ENCODE measurements at regions of chr1 and their contacts with region 1.

Region 1: DNA sequence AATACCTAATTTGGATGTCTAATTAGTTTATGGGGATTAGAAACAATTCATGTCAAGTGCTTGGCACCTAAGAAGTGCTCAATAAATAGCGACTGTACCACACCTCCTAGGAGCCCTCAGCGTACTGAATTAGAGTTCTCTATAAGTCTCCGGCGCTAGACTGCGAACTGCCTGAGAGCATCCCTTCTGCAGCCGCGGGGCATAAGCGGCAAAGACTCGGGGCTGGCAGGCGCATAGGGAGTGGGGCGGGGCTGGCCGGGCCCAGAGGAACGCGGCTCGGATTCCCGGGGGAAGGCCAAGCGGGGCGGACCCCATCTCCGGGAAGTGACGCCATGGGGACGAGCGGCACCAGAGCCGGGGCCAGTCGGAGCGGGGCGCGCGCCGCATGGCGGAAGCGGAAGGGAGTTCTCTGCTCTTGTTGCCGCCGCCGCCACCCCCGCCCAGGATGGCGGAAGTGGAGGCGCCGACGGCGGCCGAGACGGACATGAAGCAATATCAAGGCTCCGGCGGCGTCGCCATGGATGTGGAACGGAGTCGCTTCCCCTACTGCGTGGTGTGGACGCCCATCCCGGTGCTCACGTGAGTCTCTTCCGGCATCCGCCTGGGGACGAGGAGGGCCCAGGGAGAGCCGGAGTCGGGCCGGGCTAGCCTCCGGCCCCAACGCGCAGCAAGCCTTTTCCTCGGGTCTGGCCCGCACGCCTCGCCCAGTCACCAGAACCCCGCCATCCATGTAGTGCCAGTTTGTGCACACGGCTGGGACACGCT is at the start of gene TMEM222:
- DNase-seq: peak; percentile 97
- H3K4me3 ChIP-seq: peak within 1 kb of the TSS; percentile 89 to 97
- H3K4me3 Mint-ChIP-seq: peak within 1 kb of the TSS; percentile 95 to 99 (median 98)
- H3K27ac ChIP-seq: peak within 1 kb of the TSS; percentile 95
- H3K27ac Mint-ChIP-seq: peak within 1 kb of the TSS; percentile 95 to 98 (median 96)
- H3K4me1 ChIP-seq: peaks cover 53% of the 10 kb centered on the region
- H3K4me1 Mint-ChIP-seq: peaks cover 27 to 58% (median 44%) of the 10 kb centered on the region in 4 donors
- H3K27me3 ChIP-seq: peaks cover 5% of the 10 kb centered on the region
- H3K27me3 Mint-ChIP-seq: peaks cover 3 to 4% of the 10 kb centered on the region in 2 donors
- total RNA-seq, gene TMEM222: 44.4 to 45.4 TPM

Region 2: DNA sequence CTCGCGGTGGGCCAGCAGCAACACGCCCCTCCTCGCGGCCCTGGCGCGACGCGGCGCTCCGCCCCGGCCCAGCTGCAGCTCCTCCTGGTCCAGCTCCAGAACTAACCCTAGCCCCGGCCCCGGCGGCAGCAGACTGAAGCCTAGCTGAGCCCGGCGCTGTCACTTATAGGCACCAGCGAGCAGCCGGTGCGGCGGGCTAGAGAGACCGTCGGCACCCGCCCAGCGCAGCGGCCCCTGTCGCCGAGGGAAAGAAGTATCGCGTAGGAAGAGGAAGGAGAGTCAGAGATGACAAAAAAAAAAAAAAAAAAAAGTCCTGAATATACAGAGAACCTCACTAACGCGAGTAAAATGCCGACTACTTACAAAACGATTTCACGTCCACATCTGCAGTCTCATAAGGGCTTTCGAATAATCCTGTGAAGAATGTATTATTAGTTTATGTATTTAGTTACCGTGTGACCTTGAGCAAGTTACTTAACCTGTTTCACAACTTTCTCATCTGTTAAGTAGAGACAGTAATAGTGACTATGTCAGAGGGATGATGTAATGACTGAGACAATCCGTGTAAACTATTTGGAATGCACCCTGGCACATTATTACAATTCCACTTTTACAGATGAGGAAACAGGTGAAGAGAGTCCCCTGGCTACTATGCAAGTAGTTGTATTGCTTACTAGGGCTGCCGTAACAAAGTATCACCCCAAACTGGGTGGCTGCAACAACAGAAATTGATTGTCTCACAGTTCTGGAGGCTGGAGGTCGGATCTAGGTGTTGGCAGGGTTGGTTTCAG is 166.8 kb before region 1 on chr1 and contains the start of gene SLC9A1:
- CTCF ChIA-PET with region 1: no interaction called
- POLR2A ChIA-PET with region 1: no interaction called
- intact Hi-C with region 1: loop called (anchors 1 kb)
- DNase-seq: peak; percentile 93 to 95 (median 93)
- H3K4me3 ChIP-seq: peak within 1 kb of the TSS; percentile 38 to 42
- H3K4me3 Mint-ChIP-seq: peak within 1 kb of the TSS; percentile 82 to 95 (median 92)
- H3K27ac ChIP-seq: peak within 1 kb of the TSS; percentile 90
- H3K27ac Mint-ChIP-seq: peak within 1 kb of the TSS; percentile 97 to 100 (median 99)
- H3K4me1 ChIP-seq: peaks cover 46% of the 10 kb centered on the region
- H3K4me1 Mint-ChIP-seq: peaks cover 36 to 49% (median 43%) of the 10 kb centered on the region in 4 donors
- H3K27me3 ChIP-seq: no peaks in the 10 kb centered on the region
- H3K27me3 Mint-ChIP-seq: no peaks in the 10 kb centered on the region
- total RNA-seq, gene SLC9A1: 11.4 to 13.2 TPM

Region 3: GRCh38 chr1:27234049-27234882 is 87.7 kb before region 1 on chr1 and contains the start of gene WDTC1:
- CTCF ChIA-PET with region 1: no interaction called
- POLR2A ChIA-PET with region 1: no interaction called
- intact Hi-C with region 1: loop called (anchors 1 kb)
- DNase-seq: peak; percentile 97 to 99 (median 98)
- H3K4me3 ChIP-seq: peak within 1 kb of the TSS; percentile 63 to 73
- H3K4me3 Mint-ChIP-seq: peak within 1 kb of the TSS; percentile 95 to 99 (median 98)
- H3K27ac ChIP-seq: peak within 1 kb of the TSS; percentile 69
- H3K27ac Mint-ChIP-seq: peak within 1 kb of the TSS; percentile 91 to 98 (median 96)
- H3K4me1 ChIP-seq: peaks cover 26% of the 10 kb centered on the region
- H3K4me1 Mint-ChIP-seq: peaks cover 27 to 41% (median 33%) of the 10 kb centered on the region in 4 donors
- H3K27me3 ChIP-seq: no peaks in the 10 kb centered on the region
- H3K27me3 Mint-ChIP-seq: peaks cover 0 to 3% of the 10 kb centered on the region in 2 donors
- total RNA-seq, gene WDTC1: 53.3 to 54.5 TPM

Region 4: GRCh38 chr1:27332536-27333281 is 10.7 kb after region 1 on chr1:
- CTCF ChIA-PET with region 1: interaction called, 29 read pairs
- POLR2A ChIA-PET with region 1: interaction called, 7 read pairs
- intact Hi-C with region 1: no loop called
- DNase-seq: peak; percentile 54 to 65 (median 58)
- H3K4me3 ChIP-seq: no peak overlapping the region
- H3K4me3 Mint-ChIP-seq: peak overlapping the region in 2 of 8 donors; percentile 7 to 25
- H3K27ac ChIP-seq: peak overlapping the region; percentile 10
- H3K27ac Mint-ChIP-seq: peak overlapping the region in 6 of 7 donors; percentile 5 to 75 (median 61)
- H3K4me1 ChIP-seq: peaks cover 33% of the 10 kb centered on the region
- H3K4me1 Mint-ChIP-seq: peaks cover 22 to 48% (median 34%) of the 10 kb centered on the region in 4 donors
- H3K27me3 ChIP-seq: no peaks in the 10 kb centered on the region
- H3K27me3 Mint-ChIP-seq: no peaks in the 10 kb centered on the region

Region 5: DNA sequence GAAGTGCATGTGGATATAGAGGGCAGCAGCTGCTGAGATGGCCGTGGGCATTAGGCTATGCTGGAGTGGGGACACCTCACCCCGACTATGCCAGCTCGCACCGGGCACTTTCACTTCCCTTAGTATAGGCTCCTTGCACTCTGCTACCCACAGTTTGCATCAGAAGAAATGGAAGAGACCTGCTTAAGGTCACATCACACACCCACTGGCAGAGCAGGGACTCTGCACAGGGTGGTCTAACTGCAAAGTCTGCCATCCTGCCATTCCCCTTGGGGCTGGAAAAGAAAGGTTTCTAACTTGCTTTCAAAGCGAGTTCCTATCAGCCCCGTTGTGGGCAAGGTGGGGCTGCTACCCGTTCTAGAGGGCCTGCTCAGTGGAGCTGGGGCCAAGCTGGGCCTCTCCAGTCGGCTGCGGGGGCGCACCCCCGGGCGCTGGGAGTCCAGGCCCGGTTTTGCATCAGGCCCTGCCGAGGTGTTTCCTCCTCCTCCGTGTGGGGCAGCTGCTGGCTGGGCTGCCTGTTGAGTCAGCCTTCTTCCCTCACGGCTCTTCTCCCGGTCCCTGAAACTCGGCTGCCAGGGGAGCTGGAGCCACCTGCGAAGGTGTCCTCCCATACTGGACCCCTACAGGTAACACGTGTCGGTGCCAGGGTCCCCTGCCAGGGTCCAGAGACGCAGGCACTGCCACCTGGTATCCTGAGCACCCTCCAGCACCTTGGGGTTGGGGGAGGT is 19.7 kb after region 1 on chr1 and contains the start of gene SYTL1:
- CTCF ChIA-PET with region 1: interaction called, 4 read pairs
- POLR2A ChIA-PET with region 1: interaction called, 61 read pairs
- intact Hi-C with region 1: loop called (anchors 1 kb)
- DNase-seq: peak; percentile 63 to 77 (median 69)
- H3K4me3 ChIP-seq: peak within 1 kb of the TSS; percentile 82 to 94
- H3K4me3 Mint-ChIP-seq: peak within 1 kb of the TSS; percentile 90 to 99 (median 97)
- H3K27ac ChIP-seq: peak within 1 kb of the TSS; percentile 80
- H3K27ac Mint-ChIP-seq: peak within 1 kb of the TSS; percentile 92 to 96 (median 95)
- H3K4me1 ChIP-seq: peaks cover 48% of the 10 kb centered on the region
- H3K4me1 Mint-ChIP-seq: peaks cover 30 to 68% (median 47%) of the 10 kb centered on the region in 4 donors
- H3K27me3 ChIP-seq: no peaks in the 10 kb centered on the region
- H3K27me3 Mint-ChIP-seq: no peaks in the 10 kb centered on the region
- total RNA-seq, gene SYTL1: 146 to 158 TPM

Region 6: GRCh38 chr1:27357281-27358037 is 35.5 kb after region 1 on chr1:
- CTCF ChIA-PET with region 1: interaction called, 14 read pairs
- POLR2A ChIA-PET with region 1: interaction called, 6 read pairs
- intact Hi-C with region 1: no loop called
- DNase-seq: peak; percentile 80 to 84 (median 83)
- H3K4me3 ChIP-seq: peak overlapping the region; percentile 44 to 71
- H3K4me3 Mint-ChIP-seq: peak overlapping the region; percentile 74 to 85 (median 80)
- H3K27ac ChIP-seq: peak overlapping the region; percentile 57
- H3K27ac Mint-ChIP-seq: peak overlapping the region; percentile 72 to 90 (median 84)
- H3K4me1 ChIP-seq: peaks cover 47% of the 10 kb centered on the region
- H3K4me1 Mint-ChIP-seq: peaks cover 18 to 56% (median 40%) of the 10 kb centered on the region in 4 donors
- H3K27me3 ChIP-seq: no peaks in the 10 kb centered on the region
- H3K27me3 Mint-ChIP-seq: no peaks in the 10 kb centered on the region

Region 7: GRCh38 chr1:27772933-27773825 is 451.2 kb after region 1 on chr1 and contains the start of gene STX12:
- CTCF ChIA-PET with region 1: no interaction called
- POLR2A ChIA-PET with region 1: no interaction called
- intact Hi-C with region 1: loop called (anchors 2 kb)
- DNase-seq: peak; percentile 98 to 100 (median 98)
- H3K4me3 ChIP-seq: peak within 1 kb of the TSS; percentile 80 to 96
- H3K4me3 Mint-ChIP-seq: peak within 1 kb of the TSS; percentile 91 to 98 (median 97)
- H3K27ac ChIP-seq: peak within 1 kb of the TSS; percentile 87
- H3K27ac Mint-ChIP-seq: peak within 1 kb of the TSS; percentile 86 to 99 (median 99)
- H3K4me1 ChIP-seq: peaks cover 32% of the 10 kb centered on the region
- H3K4me1 Mint-ChIP-seq: peaks cover 27 to 39% (median 29%) of the 10 kb centered on the region in 4 donors
- H3K27me3 ChIP-seq: no peaks in the 10 kb centered on the region
- H3K27me3 Mint-ChIP-seq: no peaks in the 10 kb centered on the region
- total RNA-seq, gene STX12: 25.2 to 27.5 TPM

Measured in CD4-positive, alpha-beta memory T cell (primary cell).